HepG2 (cell line): ENCODE measurements at regions of chr19 and their contacts with region 1.

Region 1: GRCh38 chr19:44903602-44904425 is 1.8 kb upstream of the APOE start:
- DNase-seq: peak; percentile 80
- ATAC-seq: peak; percentile 50
- H3K4me3 ChIP-seq: peak overlapping the region; percentile 7 to 93 (median 7); a peak in 4 of 6 replicates
- H3K27ac ChIP-seq: peak overlapping the region; percentile 90
- H3K4me1 ChIP-seq: peaks cover 45% of the 10 kb centered on the region
- H3K27me3 ChIP-seq: no peaks in the 10 kb centered on the region; a peak in 1 of 5 replicates
- CTCF ChIP-seq: peak; percentile 98
- EP300 ChIP-seq: peak in 1 of 2 experiments; percentile 53; a peak in 1 of 4 replicates
- POLR2A ChIP-seq: peak; percentile 32 to 62
- RAD21 ChIP-seq: peak; percentile 95

Region 2: DNA sequence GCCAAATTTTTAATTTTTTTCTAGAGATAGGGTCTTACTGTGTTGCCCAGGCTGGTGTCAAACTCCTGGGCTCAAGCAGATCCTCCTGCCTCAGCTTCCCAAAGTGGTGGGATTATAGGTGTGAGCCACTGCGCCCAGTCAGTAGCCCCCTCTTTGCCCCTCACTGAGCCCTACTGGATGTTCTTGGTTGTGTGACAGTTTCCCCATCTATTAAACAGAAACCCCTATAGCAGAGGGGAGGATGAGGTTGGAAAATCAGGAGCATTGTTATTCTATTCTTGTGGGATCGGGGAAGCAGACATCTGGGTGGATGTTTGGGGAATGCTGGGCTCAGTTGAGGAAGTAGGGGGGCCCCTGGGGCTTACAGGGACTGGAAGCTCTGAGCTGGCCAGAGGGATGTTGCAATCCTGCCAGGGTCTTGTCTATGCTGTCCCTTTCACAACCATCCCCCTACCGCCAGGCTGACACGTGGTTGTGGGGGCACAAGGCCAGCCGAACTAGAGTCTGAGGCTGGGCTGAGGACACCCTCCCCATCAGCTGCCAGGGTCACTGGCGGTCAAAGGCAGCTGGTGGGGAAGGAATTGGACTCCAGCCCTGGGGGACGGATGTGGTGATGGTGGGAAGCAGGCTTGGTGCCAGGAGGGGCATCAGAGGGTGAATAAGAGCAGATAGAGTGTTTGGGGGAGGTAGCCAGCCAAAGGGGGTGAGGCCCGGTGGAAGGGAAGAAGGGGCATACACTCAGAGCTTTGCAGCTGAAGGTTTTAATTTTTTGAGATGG is 21.5 kb after region 1 on chr19:
- CTCF ChIA-PET with region 1: interaction called, 3 read pairs
- POLR2A ChIA-PET with region 1: interaction called, 317 read pairs
- in situ Hi-C with region 1: no loop called
- intact Hi-C with region 1: no loop called
- DNase-seq: peak; percentile 95
- ATAC-seq: peak; percentile 64
- H3K4me3 ChIP-seq: peak overlapping the region in 1 of 3 experiments; percentile 50; a peak in 2 of 6 replicates
- H3K27ac ChIP-seq: peak overlapping the region; percentile 96
- H3K4me1 ChIP-seq: peaks cover 93% of the 10 kb centered on the region
- H3K27me3 ChIP-seq: no peaks in the 10 kb centered on the region
- CTCF ChIP-seq: peak; percentile 43
- EP300 ChIP-seq: peak; percentile 88 to 97
- POLR2A ChIP-seq: peak in 1 of 2 experiments; percentile 16; a peak in 1 of 4 replicates
- RAD21 ChIP-seq: peak; percentile 55

Region 3: GRCh38 chr19:45245334-45245787 is 341.5 kb after region 1 on chr19 and contains the start of gene EXOC3L2:
- CTCF ChIA-PET with region 1: no interaction called
- POLR2A ChIA-PET with region 1: no interaction called
- in situ Hi-C with region 1: no loop called
- intact Hi-C with region 1: no loop called
- DNase-seq: no peak
- ATAC-seq: peak; percentile 28; the same call in 2 of the 3 replicates
- H3K4me3 ChIP-seq: peak within 1 kb of the TSS in 1 of 3 experiments; percentile 54; a peak in 2 of 6 replicates
- H3K27ac ChIP-seq: no peak within 1 kb of the TSS
- H3K4me1 ChIP-seq: peaks cover 49% of the 10 kb centered on the region
- H3K27me3 ChIP-seq: peaks cover 4 to 14% of the 10 kb centered on the region in 2 experiments; a peak in 4 of 5 replicates
- CTCF ChIP-seq: no peak
- EP300 ChIP-seq: no peak
- POLR2A ChIP-seq: no peak
- RAD21 ChIP-seq: no peak
- total RNA-seq, gene EXOC3L2: not detected in 2 replicates